ENCODE measurements at regions of chr10 and their contacts with region 1.

Region 1: GRCh38 chr10:120942806-120943413 is 91.7 kb downstream of the WDR11 start:
- DNase-seq: peak; percentile 72 to 91 (median 84)
- ATAC-seq: peak; percentile 94
- H3K4me3 ChIP-seq: no peak overlapping the region
- H3K27ac ChIP-seq: no peak overlapping the region
- H3K4me1 ChIP-seq: peaks cover 4 to 8% of the 10 kb centered on the region in 2 donors
- H3K27me3 ChIP-seq: peaks cover 0 to 33% of the 10 kb centered on the region in 2 donors
- CTCF ChIP-seq: peak; percentile 85 to 87

Region 2: DNA sequence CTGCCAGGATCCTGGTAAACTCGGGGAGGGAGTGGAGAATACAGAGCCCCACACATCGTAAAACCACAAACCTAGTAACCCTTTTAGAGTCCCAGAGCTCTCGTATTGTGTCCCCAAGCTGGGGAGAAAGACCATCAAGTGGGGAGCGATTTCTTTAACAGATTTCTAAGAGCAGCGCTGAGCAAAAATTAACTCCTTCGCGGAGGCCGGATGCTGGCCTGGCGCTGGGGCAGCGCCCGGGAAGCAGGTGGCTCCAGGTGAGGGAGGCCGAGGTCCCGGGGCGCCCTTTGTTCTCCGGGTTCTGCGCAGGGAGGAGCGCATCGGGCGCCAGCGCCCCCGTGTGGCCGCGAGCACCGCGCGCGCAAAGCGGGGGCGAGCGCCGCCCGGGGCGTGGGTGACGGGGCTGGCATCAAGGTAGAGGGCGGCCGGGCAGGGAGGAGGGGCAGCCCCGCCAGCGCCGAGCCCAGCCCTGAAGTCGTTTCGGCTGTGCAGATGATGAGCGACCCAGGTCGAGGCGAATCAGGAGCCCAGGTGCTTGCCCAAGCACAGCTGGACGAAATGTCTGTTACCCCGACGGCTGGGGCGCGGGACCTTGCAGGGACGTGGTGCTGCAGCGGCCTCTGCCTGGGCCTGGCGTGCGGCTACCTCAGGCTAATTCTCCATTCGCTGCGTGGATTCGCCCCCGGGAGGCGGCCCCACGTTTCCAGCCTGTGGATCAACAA is 665.7 kb after region 1 on chr10:
- intact Hi-C with region 1: loop called in 1 of 2 experiments (anchors 10 kb)
- DNase-seq: peak in 2 of 4 donors; percentile 70 to 86
- ATAC-seq: peak; percentile 96
- H3K4me3 ChIP-seq: peak overlapping the region; percentile 5 to 15
- H3K27ac ChIP-seq: no peak overlapping the region
- H3K4me1 ChIP-seq: peaks cover 0 to 7% of the 10 kb centered on the region in 2 donors
- H3K27me3 ChIP-seq: peaks cover 0 to 44% of the 10 kb centered on the region in 2 donors
- CTCF ChIP-seq: peak; percentile 84 to 94

Region 3: DNA sequence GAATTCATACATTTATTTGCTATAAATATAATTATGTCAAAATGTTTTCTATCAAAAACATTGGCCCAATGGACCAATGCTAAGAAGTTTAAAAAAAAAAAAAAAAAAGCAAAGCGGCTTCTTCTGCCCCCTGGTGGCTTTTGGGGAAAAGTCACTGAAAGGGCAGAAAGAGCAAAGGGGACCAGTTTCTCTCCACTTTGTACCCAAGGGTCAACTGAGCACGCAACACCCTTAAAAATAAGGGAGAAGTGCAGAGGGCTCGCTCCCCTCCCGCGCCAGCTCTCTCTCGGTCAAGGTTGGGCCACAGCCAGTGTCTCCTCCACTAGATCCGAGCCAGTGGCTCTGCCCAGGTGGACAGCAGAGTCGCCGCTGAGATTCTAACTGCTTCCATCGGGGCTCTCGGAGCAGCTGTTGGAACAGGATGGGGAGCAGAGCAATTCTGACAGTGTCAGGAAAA is 791.7 kb after region 1 on chr10:
- intact Hi-C with region 1: loop called in 1 of 2 experiments (anchors 10 kb)
- DNase-seq: peak in 1 of 4 donors; percentile 13
- ATAC-seq: peak; percentile 63
- H3K4me3 ChIP-seq: no peak overlapping the region
- H3K27ac ChIP-seq: no peak overlapping the region
- H3K4me1 ChIP-seq: peaks cover 0 to 3% of the 10 kb centered on the region in 2 donors
- H3K27me3 ChIP-seq: peaks cover 4 to 57% of the 10 kb centered on the region in 2 donors
- CTCF ChIP-seq: peak; percentile 64 to 68

Region 4: GRCh38 chr10:121900443-121901174 is 957.7 kb after region 1 on chr10:
- intact Hi-C with region 1: loop called in 1 of 2 experiments (anchors 10 kb)
- DNase-seq: peak in 2 of 4 donors; percentile 74 to 84
- ATAC-seq: peak; percentile 92
- H3K4me3 ChIP-seq: no peak overlapping the region
- H3K27ac ChIP-seq: no peak overlapping the region
- H3K4me1 ChIP-seq: no peaks in the 10 kb centered on the region
- H3K27me3 ChIP-seq: no peaks in the 10 kb centered on the region
- CTCF ChIP-seq: peak; percentile 62 to 70

Measured in left lung (tissue), 14 donors.